ENCODE measurements at regions of chr17 and their contacts with region 1.

Region 1: DNA sequence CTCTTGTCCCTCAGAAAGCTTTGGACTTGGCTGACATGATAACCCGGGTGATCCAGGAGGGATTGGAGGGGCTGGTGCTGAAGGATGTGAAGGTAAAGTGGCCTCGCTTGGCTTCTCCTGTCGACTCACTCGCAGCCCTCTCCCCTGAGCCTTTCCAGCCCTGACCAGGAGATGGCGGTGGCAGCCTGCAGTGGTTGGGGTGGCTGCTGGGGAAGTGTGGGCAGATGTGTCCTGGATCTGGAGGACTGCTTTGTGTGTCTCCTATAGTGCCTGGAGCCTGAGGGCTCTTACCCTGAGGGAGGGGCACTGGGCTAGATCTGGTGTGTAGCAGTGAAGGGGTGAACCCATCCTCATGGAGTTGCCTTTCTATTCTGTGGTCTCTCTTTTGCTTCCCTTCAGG is 17.9 kb downstream of the LIG3 start:
- DNase-seq: peak; percentile 75 to 79 (median 77)
- H3K4me3 ChIP-seq: no peak overlapping the region
- H3K4me3 Mint-ChIP-seq: no peak overlapping the region
- H3K27ac ChIP-seq: no peak overlapping the region
- H3K27ac Mint-ChIP-seq: peak overlapping the region in 6 of 7 donors; percentile 20 to 88 (median 80)
- H3K4me1 ChIP-seq: peaks cover 7% of the 10 kb centered on the region
- H3K4me1 Mint-ChIP-seq: peaks cover 4 to 12% (median 5%) of the 10 kb centered on the region in 4 donors
- H3K27me3 ChIP-seq: no peaks in the 10 kb centered on the region
- H3K27me3 Mint-ChIP-seq: no peaks in the 10 kb centered on the region

Region 2: GRCh38 chr17:35010093-35010492 is 11.9 kb after region 1 on chr17:
- CTCF ChIA-PET with region 1: interaction called, 10 read pairs
- POLR2A ChIA-PET with region 1: no interaction called
- intact Hi-C with region 1: no loop called
- DNase-seq: no peak
- H3K4me3 ChIP-seq: no peak overlapping the region
- H3K4me3 Mint-ChIP-seq: no peak overlapping the region
- H3K27ac ChIP-seq: no peak overlapping the region
- H3K27ac Mint-ChIP-seq: peak overlapping the region in 3 of 7 donors; percentile 18 to 60 (median 59)
- H3K4me1 ChIP-seq: no peaks in the 10 kb centered on the region
- H3K4me1 Mint-ChIP-seq: peaks cover 0 to 2% (median 0%) of the 10 kb centered on the region in 4 donors
- H3K27me3 ChIP-seq: no peaks in the 10 kb centered on the region
- H3K27me3 Mint-ChIP-seq: no peaks in the 10 kb centered on the region

Region 3: GRCh38 chr17:35046740-35047283 is 48.6 kb after region 1 on chr17:
- CTCF ChIA-PET with region 1: interaction called, 18 read pairs
- POLR2A ChIA-PET with region 1: interaction called, 3 read pairs
- intact Hi-C with region 1: no loop called
- DNase-seq: peak; percentile 71 to 89 (median 73)
- H3K4me3 ChIP-seq: peak overlapping the region; percentile 26 to 35
- H3K4me3 Mint-ChIP-seq: peak overlapping the region; percentile 74 to 87 (median 86)
- H3K27ac ChIP-seq: peak overlapping the region; percentile 68
- H3K27ac Mint-ChIP-seq: peak overlapping the region; percentile 83 to 96 (median 92)
- H3K4me1 ChIP-seq: peaks cover 94% of the 10 kb centered on the region
- H3K4me1 Mint-ChIP-seq: peaks cover 55 to 82% (median 68%) of the 10 kb centered on the region in 4 donors
- H3K27me3 ChIP-seq: no peaks in the 10 kb centered on the region
- H3K27me3 Mint-ChIP-seq: no peaks in the 10 kb centered on the region

Measured in CD4-positive, alpha-beta memory T cell (primary cell).